ENCODE measurements at regions of chr16 and their contacts with region 1.

Region 1: DNA sequence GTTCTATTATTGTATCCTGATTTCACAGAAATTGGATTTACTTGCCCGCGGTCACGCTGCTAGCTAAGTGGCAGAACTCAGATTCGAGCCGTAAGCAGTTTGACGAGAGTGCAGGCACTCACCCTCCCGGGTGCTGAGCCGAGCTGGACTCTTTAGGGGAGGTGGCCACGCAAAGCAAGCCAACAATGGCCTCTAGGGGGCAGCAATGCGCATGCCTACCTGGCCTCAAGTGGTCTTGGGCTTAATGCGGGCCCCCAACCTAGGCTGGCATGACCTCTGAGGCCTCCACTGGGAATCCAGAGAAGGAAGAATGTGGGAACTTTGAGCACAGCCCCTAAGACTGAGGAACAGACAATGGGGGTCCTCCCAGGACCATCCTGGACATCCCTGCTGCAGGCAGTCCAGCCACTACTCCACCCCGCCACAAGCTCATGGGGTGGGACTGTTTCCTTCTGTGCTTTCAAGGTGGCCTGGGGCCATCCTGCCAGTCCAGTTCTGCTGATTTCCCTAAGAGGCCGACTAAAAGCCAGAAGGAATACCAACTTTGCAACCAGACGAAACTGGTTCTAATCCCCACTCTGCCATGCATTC is 276.5 kb downstream of the XYLT1 start:
- DNase-seq: peak; percentile 38 to 71
- ATAC-seq: peak in 3 of 4 donors; percentile 40 to 65 (median 61)
- H3K4me3 ChIP-seq: no peak overlapping the region
- H3K27ac ChIP-seq: no peak overlapping the region
- H3K4me1 ChIP-seq: no peaks in the 10 kb centered on the region
- H3K27me3 ChIP-seq: no peaks in the 10 kb centered on the region
- CTCF ChIP-seq: peak; percentile 57

Region 2: DNA sequence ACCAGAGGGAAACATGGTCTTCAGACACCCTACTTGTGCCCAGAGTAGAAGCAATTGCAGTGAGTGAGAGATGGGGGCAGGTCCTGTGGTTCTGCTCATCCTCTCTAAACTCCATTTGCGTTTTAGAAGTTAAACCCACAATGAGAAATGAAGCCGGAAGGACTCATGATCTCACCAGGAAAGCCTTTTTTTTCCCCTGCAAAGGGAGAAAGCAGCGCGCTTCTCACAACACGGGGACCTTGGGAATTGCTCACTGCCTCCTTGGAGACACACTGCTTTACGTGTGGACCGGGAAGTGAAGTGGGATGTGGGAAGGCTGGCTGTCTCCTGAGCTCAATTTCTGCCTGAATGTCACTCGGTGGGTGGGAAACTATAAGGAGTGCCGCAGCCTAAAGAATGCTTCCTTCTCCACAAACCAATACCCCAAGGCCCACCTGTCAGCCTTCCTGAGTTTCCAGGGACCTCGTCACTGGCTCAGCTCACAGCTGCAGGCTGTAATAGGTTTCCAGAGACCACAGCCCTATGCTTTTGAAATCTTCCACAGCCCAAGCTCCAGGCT is 89.0 kb before region 1 on chr16:
- intact Hi-C with region 1: no loop called
- DNase-seq: no peak
- ATAC-seq: no peak
- H3K4me3 ChIP-seq: no peak overlapping the region
- H3K27ac ChIP-seq: no peak overlapping the region
- H3K4me1 ChIP-seq: no peaks in the 10 kb centered on the region
- H3K27me3 ChIP-seq: peaks cover 0 to 2% (median 0%) of the 10 kb centered on the region in 3 donors
- CTCF ChIP-seq: no peak

Region 3: DNA sequence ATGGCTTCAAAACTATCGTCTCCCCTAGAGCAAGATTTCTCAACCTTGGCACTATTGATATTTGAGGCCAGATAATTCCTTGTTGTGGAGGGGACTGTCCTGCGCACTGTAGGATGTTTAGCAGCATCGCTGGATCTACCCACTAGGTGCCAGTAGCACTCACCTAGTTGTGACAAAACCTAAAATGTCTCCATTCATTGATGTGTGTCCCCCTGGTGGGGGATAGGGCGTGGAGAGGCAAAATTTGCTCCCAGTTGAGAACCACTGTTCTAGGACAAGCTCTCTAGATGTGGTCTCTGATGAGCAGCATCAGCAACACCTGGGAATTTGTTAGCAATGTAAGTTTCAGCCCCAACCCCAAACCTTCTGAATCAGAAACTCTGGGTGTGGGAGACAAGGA is 17.5 kb after region 1 on chr16:
- intact Hi-C with region 1: no loop called
- DNase-seq: no peak
- ATAC-seq: no peak
- H3K4me3 ChIP-seq: no peak overlapping the region
- H3K27ac ChIP-seq: no peak overlapping the region
- H3K4me1 ChIP-seq: no peaks in the 10 kb centered on the region
- H3K27me3 ChIP-seq: no peaks in the 10 kb centered on the region
- CTCF ChIP-seq: peak; percentile 12

Region 4: GRCh38 chr16:17585449-17586074 is 391.3 kb after region 1 on chr16:
- intact Hi-C with region 1: loop called in 1 of 2 experiments (anchors 10 kb)
- DNase-seq: no peak
- ATAC-seq: no peak
- H3K4me3 ChIP-seq: no peak overlapping the region
- H3K27ac ChIP-seq: no peak overlapping the region
- H3K4me1 ChIP-seq: no peaks in the 10 kb centered on the region
- H3K27me3 ChIP-seq: no peaks in the 10 kb centered on the region
- CTCF ChIP-seq: no peak

Region 5: DNA sequence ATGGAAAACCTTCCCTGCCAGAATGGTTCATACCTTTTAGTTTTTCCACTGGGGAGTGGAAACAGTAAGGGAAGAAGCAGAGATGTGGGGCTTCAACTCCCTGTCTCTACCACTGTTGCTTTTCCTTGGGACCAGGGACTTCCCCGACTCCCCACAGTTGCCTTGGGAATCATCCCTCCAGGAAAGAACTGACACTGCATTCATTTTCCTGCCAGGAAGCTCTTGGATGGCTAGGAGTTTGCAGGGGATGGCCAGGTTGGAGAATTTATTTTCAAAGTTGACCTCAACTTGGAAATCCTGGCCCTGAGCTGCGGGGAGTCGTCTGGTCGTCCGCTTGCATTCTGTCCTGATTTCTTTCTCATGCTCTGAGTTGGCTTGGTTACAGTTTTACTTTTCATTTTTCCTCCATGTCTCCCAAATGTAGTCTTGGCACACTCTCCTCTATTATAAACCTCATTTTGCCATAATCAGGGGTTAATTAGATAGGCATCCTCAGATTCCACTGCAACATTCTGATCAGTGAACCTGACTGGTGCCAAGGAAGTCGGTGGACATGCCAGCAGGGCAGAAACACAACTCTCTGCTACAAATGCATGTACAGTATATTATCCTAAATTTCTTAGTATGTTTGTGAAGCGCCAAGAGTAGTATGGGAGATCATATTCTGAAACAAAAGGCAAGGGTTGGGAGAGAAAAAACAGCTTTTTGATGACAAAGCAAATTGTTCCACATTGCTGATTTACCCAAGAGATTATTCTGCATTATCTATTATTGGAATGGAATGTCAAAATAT is 497.0 kb after region 1 on chr16:
- intact Hi-C with region 1: loop called in 1 of 2 experiments (anchors 5 kb)
- DNase-seq: no peak
- ATAC-seq: no peak
- H3K4me3 ChIP-seq: no peak overlapping the region
- H3K27ac ChIP-seq: no peak overlapping the region
- H3K4me1 ChIP-seq: no peaks in the 10 kb centered on the region
- H3K27me3 ChIP-seq: peaks cover 0 to 2% (median 0%) of the 10 kb centered on the region in 3 donors
- CTCF ChIP-seq: no peak

Measured in psoas muscle (tissue), 8 donors.